GM12878 (cell line): ENCODE measurements at regions of chr2 and their contacts with region 1.

Region 1: GRCh38 chr2:96900237-96900636 is 30.4 kb upstream of the SEMA4C start:
- DNase-seq: no peak
- ATAC-seq: no peak
- H3K4me3 ChIP-seq: no peak overlapping the region
- H3K27ac ChIP-seq: no peak overlapping the region
- H3K4me1 ChIP-seq: no peaks in the 10 kb centered on the region
- H3K27me3 ChIP-seq: no peaks in the 10 kb centered on the region; a peak in 1 of 4 replicates
- CTCF ChIP-seq: no peak
- EP300 ChIP-seq: no peak
- POLR2A ChIP-seq: no peak
- RAD21 ChIP-seq: no peak

Region 2: DNA sequence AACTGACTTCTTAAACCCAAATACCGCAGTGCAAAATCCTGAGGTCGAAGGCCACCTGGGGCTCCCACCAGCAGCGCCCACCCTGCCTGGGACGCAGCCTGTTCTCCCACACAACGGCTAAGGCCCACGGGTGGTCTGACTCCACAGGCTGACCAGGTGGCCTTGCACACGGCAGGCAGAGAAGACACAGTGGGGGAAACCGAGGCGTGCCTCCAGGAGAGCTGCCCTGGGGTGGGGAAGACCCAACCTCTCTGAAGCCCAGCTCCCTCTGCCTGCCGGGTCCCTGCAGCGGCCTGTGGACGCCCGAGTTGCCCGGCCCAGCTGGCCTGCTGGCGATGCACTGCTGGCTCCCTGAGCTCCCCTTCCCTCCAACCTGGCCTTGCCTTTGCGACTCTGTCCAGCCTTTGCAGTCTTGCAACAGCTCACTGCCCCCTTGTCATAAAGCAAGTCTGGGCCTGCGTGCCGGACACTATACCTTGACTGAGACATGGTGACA is 20.6 kb before region 1 on chr2:
- CTCF ChIA-PET with region 1: no interaction called
- POLR2A ChIA-PET with region 1: interaction called, 10 read pairs
- RAD21 ChIA-PET with region 1: no interaction called
- SMC1A ChIA-PET with region 1: interaction called, 3 read pairs
- in situ Hi-C with region 1: no loop called
- intact Hi-C with region 1: no loop called
- DNase-seq: no peak
- ATAC-seq: no peak
- H3K4me3 ChIP-seq: no peak overlapping the region
- H3K27ac ChIP-seq: no peak overlapping the region
- H3K4me1 ChIP-seq: peaks cover 13% of the 10 kb centered on the region
- H3K27me3 ChIP-seq: no peaks in the 10 kb centered on the region
- CTCF ChIP-seq: no peak
- EP300 ChIP-seq: no peak
- POLR2A ChIP-seq: no peak
- RAD21 ChIP-seq: no peak

Region 3: GRCh38 chr2:96916646-96917575 is 16.7 kb after region 1 on chr2:
- CTCF ChIA-PET with region 1: no interaction called
- POLR2A ChIA-PET with region 1: no interaction called
- RAD21 ChIA-PET with region 1: no interaction called
- SMC1A ChIA-PET with region 1: no interaction called
- in situ Hi-C with region 1: no loop called
- intact Hi-C with region 1: no loop called
- DNase-seq: no peak
- ATAC-seq: no peak
- H3K4me3 ChIP-seq: no peak overlapping the region
- H3K27ac ChIP-seq: no peak overlapping the region
- H3K4me1 ChIP-seq: peaks cover 8% of the 10 kb centered on the region
- H3K27me3 ChIP-seq: peaks cover 1 to 2% of the 10 kb centered on the region in 2 experiments; a peak in 2 of 4 replicates
- CTCF ChIP-seq: no peak
- EP300 ChIP-seq: no peak
- POLR2A ChIP-seq: no peak
- RAD21 ChIP-seq: no peak

Region 4: DNA sequence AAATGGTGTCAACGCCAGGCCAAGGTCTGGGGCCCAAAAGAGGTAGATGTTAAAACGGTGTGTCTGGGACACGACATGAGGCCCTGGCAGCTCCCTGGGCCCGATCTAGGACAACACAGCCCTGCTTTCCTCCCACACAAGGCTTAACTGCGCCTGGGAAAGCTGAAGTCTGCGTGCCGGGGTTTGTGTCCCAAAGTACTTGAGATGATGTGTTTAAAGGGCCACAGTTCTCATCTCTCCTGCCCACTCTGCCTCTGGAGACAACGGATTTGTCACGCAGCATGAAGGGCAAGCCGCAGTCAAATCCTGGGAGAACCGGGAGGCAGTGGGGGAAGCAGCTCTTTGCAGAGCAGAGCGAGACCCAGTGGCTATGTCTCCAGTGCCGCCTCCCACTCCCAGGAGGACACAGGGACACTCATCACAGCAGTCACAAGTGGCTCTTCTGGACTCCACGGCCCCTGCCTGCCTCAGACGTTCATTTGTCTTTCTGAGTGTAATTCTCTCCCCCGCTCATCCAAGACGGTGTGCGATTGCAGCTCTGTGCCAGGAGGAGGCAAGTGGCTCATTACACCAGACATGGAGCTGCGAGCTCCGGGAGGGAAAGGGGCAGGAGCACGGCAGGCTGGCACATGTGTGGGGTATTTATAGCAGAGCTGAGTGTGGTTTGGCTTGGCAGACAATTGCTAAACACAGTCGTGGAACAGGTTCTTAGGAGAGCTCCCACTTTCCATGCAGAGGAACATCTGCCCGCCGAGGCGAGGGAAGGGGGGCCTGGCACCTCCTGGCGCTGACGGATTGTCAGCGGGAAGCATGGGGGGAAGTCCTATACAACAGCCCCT is 27.4 kb after region 1 on chr2:
- CTCF ChIA-PET with region 1: no interaction called
- POLR2A ChIA-PET with region 1: no interaction called
- RAD21 ChIA-PET with region 1: no interaction called
- SMC1A ChIA-PET with region 1: no interaction called
- in situ Hi-C with region 1: no loop called
- intact Hi-C with region 1: no loop called
- DNase-seq: no peak
- ATAC-seq: no peak
- H3K4me3 ChIP-seq: no peak overlapping the region
- H3K27ac ChIP-seq: no peak overlapping the region
- H3K4me1 ChIP-seq: no peaks in the 10 kb centered on the region
- H3K27me3 ChIP-seq: peaks cover 1 to 3% of the 10 kb centered on the region in 2 experiments; a peak in 3 of 4 replicates
- CTCF ChIP-seq: no peak
- EP300 ChIP-seq: no peak
- POLR2A ChIP-seq: no peak
- RAD21 ChIP-seq: no peak